B cell (primary cell): ENCODE measurements at regions of chr5 and their contacts with region 1.

Region 1: DNA sequence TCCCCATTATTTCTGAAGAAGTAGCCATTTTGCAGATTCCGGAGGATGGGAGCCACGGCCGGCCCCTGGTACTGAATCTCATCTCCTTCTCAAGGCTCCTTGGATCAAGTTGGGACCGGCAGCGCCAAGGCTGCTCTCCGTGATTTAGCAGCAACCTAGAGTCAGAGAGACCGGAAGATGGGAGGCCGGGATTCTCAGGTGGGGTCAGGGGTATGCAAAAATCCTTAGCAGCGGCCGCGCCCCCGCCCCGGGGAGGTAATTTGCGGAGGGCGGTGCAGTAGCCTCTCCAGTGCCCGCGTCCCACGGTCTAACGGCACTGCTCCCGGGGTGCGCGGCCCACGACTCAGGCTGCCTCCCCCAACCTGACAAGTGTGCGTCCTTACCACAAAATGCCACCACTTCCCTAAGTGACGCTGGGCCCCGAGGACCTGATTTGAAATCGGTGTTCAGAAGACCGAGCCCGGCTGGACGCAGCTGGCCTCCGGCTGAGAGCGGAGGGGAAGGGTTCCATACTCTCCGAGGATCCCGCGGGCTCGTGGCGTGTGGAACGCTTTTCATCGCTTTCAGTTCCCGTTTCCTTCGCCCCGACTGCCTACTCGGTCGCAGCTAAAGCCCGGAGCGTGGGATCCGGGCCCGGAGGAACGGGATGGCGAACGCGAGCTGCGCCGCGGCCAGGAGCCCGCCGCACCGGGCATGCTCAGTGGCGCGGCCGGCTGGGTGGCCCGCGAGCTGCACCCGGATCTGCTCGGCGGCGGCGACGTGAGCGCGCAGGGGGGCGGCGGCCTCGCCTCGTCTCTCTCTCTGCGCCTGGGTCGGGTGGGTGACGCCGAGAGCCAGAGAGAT is at the start of gene SCAMP1:
- DNase-seq: peak; percentile 97
- ATAC-seq: peak; percentile 87
- H3K4me3 ChIP-seq: peak within 1 kb of the TSS; percentile 67 to 99 (median 88)
- H3K4me3 Mint-ChIP-seq: peak within 1 kb of the TSS; percentile 93
- H3K27ac ChIP-seq: peak within 1 kb of the TSS; percentile 81 to 85
- H3K27ac Mint-ChIP-seq: peak within 1 kb of the TSS; percentile 90
- H3K4me1 ChIP-seq: peaks cover 20 to 22% of the 10 kb centered on the region in 2 donors
- H3K4me1 Mint-ChIP-seq: peaks cover 37% of the 10 kb centered on the region
- H3K27me3 ChIP-seq: no peaks in the 10 kb centered on the region
- H3K27me3 Mint-ChIP-seq: no peaks in the 10 kb centered on the region
- CTCF ChIP-seq: peak; percentile 18
- total RNA-seq, gene SCAMP1: 18.4 and 25.4 TPM in 2 replicates

Region 2: GRCh38 chr5:77775790-77776553 is 584.1 kb before region 1 on chr5 and contains the start of gene TBCA:
- CTCF ChIA-PET with region 1: no interaction called
- POLR2A ChIA-PET with region 1: no interaction called
- intact Hi-C with region 1: loop called (anchors 1 kb)
- DNase-seq: peak; percentile 98
- ATAC-seq: peak; percentile 85
- H3K4me3 ChIP-seq: peak within 1 kb of the TSS; percentile 55 to 96 (median 74)
- H3K4me3 Mint-ChIP-seq: peak within 1 kb of the TSS; percentile 90
- H3K27ac ChIP-seq: peak within 1 kb of the TSS; percentile 93 to 98
- H3K27ac Mint-ChIP-seq: peak within 1 kb of the TSS; percentile 98
- H3K4me1 ChIP-seq: peaks cover 19 to 22% of the 10 kb centered on the region in 2 donors
- H3K4me1 Mint-ChIP-seq: peaks cover 35% of the 10 kb centered on the region
- H3K27me3 ChIP-seq: no peaks in the 10 kb centered on the region
- H3K27me3 Mint-ChIP-seq: no peaks in the 10 kb centered on the region
- CTCF ChIP-seq: peak; percentile 42
- total RNA-seq, gene TBCA: 94.8 and 110 TPM in 2 replicates

Region 3: DNA sequence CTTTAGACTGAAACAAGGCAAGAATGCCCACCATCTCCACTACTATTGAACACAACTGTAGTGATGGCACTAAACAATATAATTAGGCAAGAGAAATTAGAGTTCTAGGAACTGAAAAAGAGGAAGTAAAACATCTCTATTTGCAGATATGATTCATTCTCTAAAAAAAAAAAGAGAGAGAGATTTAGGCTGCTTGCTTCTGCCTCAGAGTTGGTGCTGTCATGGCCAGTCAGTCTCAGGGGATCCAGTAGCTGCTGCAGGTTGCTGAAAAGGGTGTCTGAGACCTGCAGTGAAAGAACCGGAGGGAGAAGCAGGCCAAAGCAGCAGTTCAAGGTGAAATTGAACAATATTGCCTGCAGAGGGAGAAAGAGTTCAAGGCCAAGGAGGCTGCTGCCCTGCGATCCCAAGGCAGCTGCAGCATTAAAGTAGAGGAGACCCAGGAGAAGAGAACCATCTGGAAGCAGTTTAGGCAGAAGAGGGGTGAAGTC is 138.0 kb before region 1 on chr5:
- CTCF ChIA-PET with region 1: interaction called, 5 read pairs
- POLR2A ChIA-PET with region 1: no interaction called
- intact Hi-C with region 1: loop called (anchors 1 kb)
- DNase-seq: peak; percentile 90
- ATAC-seq: peak; percentile 100
- H3K4me3 ChIP-seq: no peak overlapping the region
- H3K4me3 Mint-ChIP-seq: peak overlapping the region; percentile 4
- H3K27ac ChIP-seq: peak overlapping the region; percentile 29 to 33
- H3K27ac Mint-ChIP-seq: peak overlapping the region; percentile 85
- H3K4me1 ChIP-seq: peaks cover 8 to 10% of the 10 kb centered on the region in 2 donors
- H3K4me1 Mint-ChIP-seq: peaks cover 18% of the 10 kb centered on the region
- H3K27me3 ChIP-seq: no peaks in the 10 kb centered on the region
- H3K27me3 Mint-ChIP-seq: no peaks in the 10 kb centered on the region
- CTCF ChIP-seq: peak; percentile 67

Region 4: GRCh38 chr5:78501411-78502352 is 141.6 kb after region 1 on chr5:
- CTCF ChIA-PET with region 1: no interaction called
- POLR2A ChIA-PET with region 1: no interaction called
- intact Hi-C with region 1: no loop called
- DNase-seq: no peak
- ATAC-seq: no peak
- H3K4me3 ChIP-seq: no peak overlapping the region
- H3K4me3 Mint-ChIP-seq: no peak overlapping the region
- H3K27ac ChIP-seq: no peak overlapping the region
- H3K27ac Mint-ChIP-seq: no peak overlapping the region
- H3K4me1 ChIP-seq: peaks cover 10 to 13% of the 10 kb centered on the region in 2 donors
- H3K4me1 Mint-ChIP-seq: peaks cover 40% of the 10 kb centered on the region
- H3K27me3 ChIP-seq: no peaks in the 10 kb centered on the region
- H3K27me3 Mint-ChIP-seq: no peaks in the 10 kb centered on the region
- CTCF ChIP-seq: no peak

Region 5: GRCh38 chr5:78648359-78649210 is 288.5 kb after region 1 on chr5 and contains the start of gene LHFPL2:
- CTCF ChIA-PET with region 1: no interaction called
- POLR2A ChIA-PET with region 1: no interaction called
- intact Hi-C with region 1: loop called (anchors 2 kb)
- DNase-seq: peak; percentile 73
- ATAC-seq: peak; percentile 74
- H3K4me3 ChIP-seq: peak within 1 kb of the TSS; percentile 43 to 72 (median 64)
- H3K4me3 Mint-ChIP-seq: peak within 1 kb of the TSS; percentile 91
- H3K27ac ChIP-seq: no peak within 1 kb of the TSS
- H3K27ac Mint-ChIP-seq: peak within 1 kb of the TSS; percentile 83
- H3K4me1 ChIP-seq: peaks cover 16 to 18% of the 10 kb centered on the region in 2 donors
- H3K4me1 Mint-ChIP-seq: peaks cover 26% of the 10 kb centered on the region
- H3K27me3 ChIP-seq: peaks cover 0 to 11% (median 6%) of the 10 kb centered on the region in 4 experiments
- H3K27me3 Mint-ChIP-seq: no peaks in the 10 kb centered on the region
- CTCF ChIP-seq: no peak
- total RNA-seq, gene LHFPL2: 33.0 and 35.5 TPM in 2 replicates

Region 6: GRCh38 chr5:80255732-80256479 is 1895.9 kb after region 1 on chr5 and contains the start of gene SERINC5:
- CTCF ChIA-PET with region 1: interaction called, 3 read pairs
- POLR2A ChIA-PET with region 1: no interaction called
- intact Hi-C with region 1: loop called (anchors 5 kb)
- DNase-seq: peak; percentile 87
- ATAC-seq: peak; percentile 87
- H3K4me3 ChIP-seq: peak within 1 kb of the TSS; percentile 80 to 93 (median 89)
- H3K4me3 Mint-ChIP-seq: peak within 1 kb of the TSS; percentile 100
- H3K27ac ChIP-seq: peak within 1 kb of the TSS; percentile 78 to 79
- H3K27ac Mint-ChIP-seq: peak within 1 kb of the TSS; percentile 98
- H3K4me1 ChIP-seq: peaks cover 9 to 24% of the 10 kb centered on the region in 2 donors
- H3K4me1 Mint-ChIP-seq: peaks cover 28% of the 10 kb centered on the region
- H3K27me3 ChIP-seq: no peaks in the 10 kb centered on the region
- H3K27me3 Mint-ChIP-seq: no peaks in the 10 kb centered on the region
- CTCF ChIP-seq: no peak
- total RNA-seq, gene SERINC5: 9.5 and 11.4 TPM in 2 replicates